Right cardiac atrium (tissue), 5 donors: ENCODE measurements at regions of chr22 and their contacts with region 1.

Region 1: DNA sequence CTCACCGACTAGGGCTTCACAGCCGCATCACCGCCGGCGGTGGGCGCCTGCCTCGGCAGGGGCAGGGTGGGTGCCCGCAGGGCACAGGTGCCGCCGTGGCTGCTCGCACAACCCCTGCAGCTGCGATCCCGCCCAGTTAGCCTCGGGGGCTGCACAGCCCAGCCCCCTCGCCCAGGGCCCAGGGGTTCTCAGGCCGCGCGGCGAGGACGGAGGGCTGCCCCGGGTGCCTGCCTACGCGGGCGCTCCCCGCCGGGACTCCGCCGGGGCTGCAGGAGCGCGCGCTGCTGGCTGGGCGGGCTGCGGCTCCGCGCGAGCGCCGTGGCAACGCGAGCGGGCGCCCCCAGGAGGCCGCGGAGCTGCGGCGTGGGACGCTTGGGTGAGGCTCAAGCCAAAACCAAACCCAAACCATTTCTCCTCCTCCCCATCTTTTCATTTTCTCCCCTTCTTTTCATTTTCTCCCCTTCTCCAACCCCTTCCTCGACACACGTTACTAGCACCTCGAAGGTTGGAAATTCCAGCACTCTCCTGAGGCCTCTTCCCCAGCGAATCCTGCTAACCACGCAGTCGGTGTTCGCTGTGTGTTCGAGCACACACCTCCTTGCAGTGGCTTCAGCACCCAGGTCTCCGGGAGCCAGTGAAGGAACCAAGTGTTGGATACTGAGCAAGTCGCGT is at the start of gene MICAL3:
- DNase-seq: peak; percentile 65 to 85 (median 84)
- ATAC-seq: peak; percentile 87 to 91
- H3K4me3 ChIP-seq: peak within 1 kb of the TSS; percentile 44
- H3K27ac ChIP-seq: peak within 1 kb of the TSS; percentile 28
- H3K4me1 ChIP-seq: peaks cover 3% of the 10 kb centered on the region
- H3K27me3 ChIP-seq: no peaks in the 10 kb centered on the region
- total RNA-seq, gene MICAL3: 72.1 to 105 (median 79.1) TPM

Region 2: GRCh38 chr22:17830043-17830961 is 194.1 kb before region 1 on chr22:
- intact Hi-C with region 1: loop called in 2 of 4 experiments (anchors 5 to 10 kb)
- DNase-seq: peak; percentile 81 to 94 (median 90)
- ATAC-seq: peak; percentile 78 to 79
- H3K4me3 ChIP-seq: no peak overlapping the region
- H3K27ac ChIP-seq: no peak overlapping the region
- H3K4me1 ChIP-seq: peaks cover 4% of the 10 kb centered on the region
- H3K27me3 ChIP-seq: no peaks in the 10 kb centered on the region

Region 3: GRCh38 chr22:17910561-17911311 is 113.7 kb before region 1 on chr22:
- intact Hi-C with region 1: loop called in 2 of 4 experiments (anchors 5 to 10 kb)
- DNase-seq: peak; percentile 78 to 88 (median 88)
- ATAC-seq: peak; percentile 90 to 95
- H3K4me3 ChIP-seq: no peak overlapping the region
- H3K27ac ChIP-seq: peak overlapping the region; percentile 95
- H3K4me1 ChIP-seq: peaks cover 24% of the 10 kb centered on the region
- H3K27me3 ChIP-seq: no peaks in the 10 kb centered on the region

Region 4: GRCh38 chr22:17972385-17973181 is 51.8 kb before region 1 on chr22:
- intact Hi-C with region 1: loop called in 1 of 4 experiments (anchors 10 kb)
- DNase-seq: peak; percentile 51 to 77 (median 73)
- ATAC-seq: peak; percentile 67 to 71
- H3K4me3 ChIP-seq: no peak overlapping the region
- H3K27ac ChIP-seq: peak overlapping the region; percentile 22
- H3K4me1 ChIP-seq: peaks cover 24% of the 10 kb centered on the region
- H3K27me3 ChIP-seq: no peaks in the 10 kb centered on the region